Naive thymus-derived CD4-positive, alpha-beta T cell (primary cell): ENCODE measurements at regions of chr9 and their contacts with region 1.

Region 1: GRCh38 chr9:137046098-137046787 is at the start of gene NPDC1:
- DNase-seq: peak; percentile 55 to 86 (median 66)
- ATAC-seq: peak; percentile 92
- H3K4me3 ChIP-seq: peak within 1 kb of the TSS; percentile 46
- H3K4me3 Mint-ChIP-seq: peak within 1 kb of the TSS; percentile 29 to 79 (median 59)
- H3K27ac ChIP-seq: no peak within 1 kb of the TSS
- H3K27ac Mint-ChIP-seq: no peak within 1 kb of the TSS
- H3K4me1 ChIP-seq: peaks cover 9 to 25% of the 10 kb centered on the region in 2 donors
- H3K4me1 Mint-ChIP-seq: peaks cover 0 to 11% (median 9%) of the 10 kb centered on the region in 7 donors
- H3K27me3 ChIP-seq: peaks cover 9 to 35% of the 10 kb centered on the region in 2 donors
- H3K27me3 Mint-ChIP-seq: peaks cover 15 to 46% (median 34%) of the 10 kb centered on the region in 5 donors
- total RNA-seq, gene NPDC1: 2.3 to 37.5 (median 7.4) TPM

Region 2: GRCh38 chr9:137064027-137064879 is 18.0 kb after region 1 on chr9:
- CTCF ChIA-PET with region 1: interaction called, 15 read pairs
- POLR2A ChIA-PET with region 1: interaction called, 4 read pairs
- intact Hi-C with region 1: loop called (anchors 1 kb)
- DNase-seq: peak in 4 of 9 donors; percentile 39 to 78 (median 62)
- ATAC-seq: peak; percentile 53
- H3K4me3 ChIP-seq: no peak overlapping the region
- H3K4me3 Mint-ChIP-seq: no peak overlapping the region
- H3K27ac ChIP-seq: no peak overlapping the region
- H3K27ac Mint-ChIP-seq: no peak overlapping the region
- H3K4me1 ChIP-seq: peaks cover 0 to 5% of the 10 kb centered on the region in 2 donors
- H3K4me1 Mint-ChIP-seq: peaks cover 4 to 15% (median 5%) of the 10 kb centered on the region in 7 donors
- H3K27me3 ChIP-seq: no peaks in the 10 kb centered on the region
- H3K27me3 Mint-ChIP-seq: no peaks in the 10 kb centered on the region

Region 3: GRCh38 chr9:137070201-137070905 is 24.1 kb after region 1 on chr9 and contains the start of gene SAPCD2:
- CTCF ChIA-PET with region 1: interaction called, 15 read pairs
- POLR2A ChIA-PET with region 1: interaction called, 4 read pairs
- intact Hi-C with region 1: loop called (anchors 1 kb)
- DNase-seq: peak; percentile 72 to 88 (median 85)
- ATAC-seq: peak; percentile 94
- H3K4me3 ChIP-seq: peak within 1 kb of the TSS; percentile 27
- H3K4me3 Mint-ChIP-seq: peak within 1 kb of the TSS; percentile 66 to 92 (median 81)
- H3K27ac ChIP-seq: peak within 1 kb of the TSS; percentile 51
- H3K27ac Mint-ChIP-seq: peak within 1 kb of the TSS in 6 of 9 donors; percentile 40 to 86 (median 62)
- H3K4me1 ChIP-seq: peaks cover 11 to 15% of the 10 kb centered on the region in 2 donors
- H3K4me1 Mint-ChIP-seq: peaks cover 10 to 38% (median 12%) of the 10 kb centered on the region in 7 donors
- H3K27me3 ChIP-seq: no peaks in the 10 kb centered on the region
- H3K27me3 Mint-ChIP-seq: no peaks in the 10 kb centered on the region
- total RNA-seq, gene SAPCD2: 0.16 to 22.1 (median 0.74) TPM

Region 4: GRCh38 chr9:138038244-138038671 is 992.0 kb after region 1 on chr9:
- CTCF ChIA-PET with region 1: no interaction called
- POLR2A ChIA-PET with region 1: no interaction called
- intact Hi-C with region 1: no loop called
- DNase-seq: no peak
- ATAC-seq: no peak
- H3K4me3 ChIP-seq: no peak overlapping the region
- H3K4me3 Mint-ChIP-seq: no peak overlapping the region
- H3K27ac ChIP-seq: no peak overlapping the region
- H3K27ac Mint-ChIP-seq: no peak overlapping the region
- H3K4me1 ChIP-seq: no peaks in the 10 kb centered on the region
- H3K4me1 Mint-ChIP-seq: no peaks in the 10 kb centered on the region
- H3K27me3 ChIP-seq: peaks cover 0 to 3% of the 10 kb centered on the region in 2 donors
- H3K27me3 Mint-ChIP-seq: peaks cover 3 to 53% (median 30%) of the 10 kb centered on the region in 5 donors